CD8-positive, alpha-beta T cell (primary cell): ENCODE measurements at regions of chr17 and their contacts with region 1.

Region 1: DNA sequence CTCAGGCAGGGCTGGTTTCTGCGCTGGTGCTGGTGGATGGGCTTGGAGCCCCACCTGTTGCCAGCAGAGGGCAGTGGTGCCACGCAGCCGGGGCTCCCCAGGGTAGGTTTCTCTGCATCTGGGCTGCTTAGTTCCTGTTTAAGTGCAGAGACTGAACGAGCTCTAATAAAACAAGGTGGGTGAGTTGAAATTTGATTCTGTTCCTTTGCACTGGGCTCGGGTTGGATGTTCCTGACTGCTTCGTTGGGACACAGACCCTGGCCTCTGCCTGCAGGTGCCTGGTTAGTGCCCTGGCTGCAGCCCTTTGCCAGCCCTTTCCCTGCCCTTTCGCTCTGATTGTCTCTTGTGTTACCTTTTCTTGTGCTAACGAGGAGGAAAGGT is 30.0 kb downstream of the TBCD start:
- DNase-seq: peak; percentile 81 to 94 (median 87)
- ATAC-seq: peak; percentile 100
- H3K4me3 ChIP-seq: no peak overlapping the region
- H3K4me3 Mint-ChIP-seq: no peak overlapping the region
- H3K27ac ChIP-seq: no peak overlapping the region
- H3K27ac Mint-ChIP-seq: peak overlapping the region; percentile 46
- H3K4me1 ChIP-seq: peaks cover 9% of the 10 kb centered on the region
- H3K4me1 Mint-ChIP-seq: peaks cover 16% of the 10 kb centered on the region
- H3K27me3 ChIP-seq: no peaks in the 10 kb centered on the region
- H3K27me3 Mint-ChIP-seq: no peaks in the 10 kb centered on the region
- CTCF ChIP-seq: peak; percentile 88

Region 2: GRCh38 chr17:82863941-82864774 is 82.3 kb after region 1 on chr17:
- CTCF ChIA-PET with region 1: interaction called, 8 read pairs
- POLR2A ChIA-PET with region 1: interaction called, 4 read pairs
- intact Hi-C with region 1: loop called in 1 of 2 experiments (anchors 2 kb)
- DNase-seq: peak; percentile 75 to 97 (median 88)
- ATAC-seq: peak; percentile 85
- H3K4me3 ChIP-seq: peak overlapping the region; percentile 23 to 46
- H3K4me3 Mint-ChIP-seq: peak overlapping the region; percentile 63
- H3K27ac ChIP-seq: peak overlapping the region; percentile 54 to 84
- H3K27ac Mint-ChIP-seq: peak overlapping the region; percentile 98
- H3K4me1 ChIP-seq: peaks cover 65% of the 10 kb centered on the region
- H3K4me1 Mint-ChIP-seq: peaks cover 65% of the 10 kb centered on the region
- H3K27me3 ChIP-seq: no peaks in the 10 kb centered on the region
- H3K27me3 Mint-ChIP-seq: no peaks in the 10 kb centered on the region
- CTCF ChIP-seq: no peak

Region 3: GRCh38 chr17:82881900-82882714 is 100.2 kb after region 1 on chr17:
- CTCF ChIA-PET with region 1: interaction called, 11 read pairs
- POLR2A ChIA-PET with region 1: no interaction called
- intact Hi-C with region 1: no loop called
- DNase-seq: no peak
- ATAC-seq: no peak
- H3K4me3 ChIP-seq: peak overlapping the region; percentile 14 to 70
- H3K4me3 Mint-ChIP-seq: peak overlapping the region; percentile 82
- H3K27ac ChIP-seq: peak overlapping the region; percentile 74
- H3K27ac Mint-ChIP-seq: peak overlapping the region; percentile 99
- H3K4me1 ChIP-seq: peaks cover 63% of the 10 kb centered on the region
- H3K4me1 Mint-ChIP-seq: peaks cover 71% of the 10 kb centered on the region
- H3K27me3 ChIP-seq: no peaks in the 10 kb centered on the region
- H3K27me3 Mint-ChIP-seq: no peaks in the 10 kb centered on the region
- CTCF ChIP-seq: no peak

Region 4: DNA sequence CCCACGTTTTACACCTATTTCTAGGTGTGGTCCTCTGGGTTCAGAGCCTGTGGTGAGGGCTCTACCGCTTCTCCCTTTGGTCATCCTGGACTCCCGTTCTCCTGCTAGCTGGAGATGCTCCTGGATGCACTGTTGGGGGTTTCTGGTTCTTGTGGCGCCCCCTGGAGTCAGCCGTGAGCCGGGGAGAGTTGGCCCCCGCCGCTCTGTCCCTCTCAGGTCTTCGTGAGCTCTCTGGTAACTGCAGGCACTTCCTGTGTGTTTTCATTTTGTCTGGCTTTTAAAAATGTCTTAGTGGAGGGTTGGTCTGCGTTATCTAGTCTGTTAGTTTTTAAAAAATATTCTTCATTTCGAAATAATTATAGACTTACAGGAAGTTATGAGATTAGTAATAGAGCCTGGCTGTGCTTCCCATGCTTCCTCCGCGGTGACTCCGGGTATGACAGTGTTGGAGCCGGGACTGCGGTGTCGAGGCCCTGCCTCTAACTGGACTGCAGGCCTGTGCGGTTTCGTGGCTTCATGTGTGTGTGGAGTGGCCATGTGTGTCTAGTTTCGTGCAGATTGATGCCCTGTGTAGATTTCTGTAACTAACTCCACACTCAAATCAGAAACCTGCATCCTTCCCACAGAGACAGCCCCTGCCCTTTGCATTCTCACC is 135.9 kb after region 1 on chr17:
- CTCF ChIA-PET with region 1: interaction called, 52 read pairs
- POLR2A ChIA-PET with region 1: no interaction called
- intact Hi-C with region 1: loop called (anchors 1 kb)
- DNase-seq: peak in 8 of 9 experiments; percentile 16 to 67 (median 50)
- ATAC-seq: peak; percentile 65
- H3K4me3 ChIP-seq: no peak overlapping the region
- H3K4me3 Mint-ChIP-seq: no peak overlapping the region
- H3K27ac ChIP-seq: no peak overlapping the region
- H3K27ac Mint-ChIP-seq: no peak overlapping the region
- H3K4me1 ChIP-seq: peaks cover 4% of the 10 kb centered on the region
- H3K4me1 Mint-ChIP-seq: peaks cover 15% of the 10 kb centered on the region
- H3K27me3 ChIP-seq: no peaks in the 10 kb centered on the region
- H3K27me3 Mint-ChIP-seq: no peaks in the 10 kb centered on the region
- CTCF ChIP-seq: peak; percentile 21

Region 5: GRCh38 chr17:82962864-82963684 is 181.2 kb after region 1 on chr17:
- CTCF ChIA-PET with region 1: no interaction called
- POLR2A ChIA-PET with region 1: no interaction called
- intact Hi-C with region 1: loop called (anchors 1 to 5 kb)
- DNase-seq: peak in 8 of 9 experiments; percentile 14 to 74 (median 38)
- ATAC-seq: peak; percentile 66
- H3K4me3 ChIP-seq: no peak overlapping the region
- H3K4me3 Mint-ChIP-seq: no peak overlapping the region
- H3K27ac ChIP-seq: no peak overlapping the region
- H3K27ac Mint-ChIP-seq: no peak overlapping the region
- H3K4me1 ChIP-seq: peaks cover 6% of the 10 kb centered on the region
- H3K4me1 Mint-ChIP-seq: peaks cover 6% of the 10 kb centered on the region
- H3K27me3 ChIP-seq: no peaks in the 10 kb centered on the region
- H3K27me3 Mint-ChIP-seq: no peaks in the 10 kb centered on the region
- CTCF ChIP-seq: peak; percentile 33

Region 6: DNA sequence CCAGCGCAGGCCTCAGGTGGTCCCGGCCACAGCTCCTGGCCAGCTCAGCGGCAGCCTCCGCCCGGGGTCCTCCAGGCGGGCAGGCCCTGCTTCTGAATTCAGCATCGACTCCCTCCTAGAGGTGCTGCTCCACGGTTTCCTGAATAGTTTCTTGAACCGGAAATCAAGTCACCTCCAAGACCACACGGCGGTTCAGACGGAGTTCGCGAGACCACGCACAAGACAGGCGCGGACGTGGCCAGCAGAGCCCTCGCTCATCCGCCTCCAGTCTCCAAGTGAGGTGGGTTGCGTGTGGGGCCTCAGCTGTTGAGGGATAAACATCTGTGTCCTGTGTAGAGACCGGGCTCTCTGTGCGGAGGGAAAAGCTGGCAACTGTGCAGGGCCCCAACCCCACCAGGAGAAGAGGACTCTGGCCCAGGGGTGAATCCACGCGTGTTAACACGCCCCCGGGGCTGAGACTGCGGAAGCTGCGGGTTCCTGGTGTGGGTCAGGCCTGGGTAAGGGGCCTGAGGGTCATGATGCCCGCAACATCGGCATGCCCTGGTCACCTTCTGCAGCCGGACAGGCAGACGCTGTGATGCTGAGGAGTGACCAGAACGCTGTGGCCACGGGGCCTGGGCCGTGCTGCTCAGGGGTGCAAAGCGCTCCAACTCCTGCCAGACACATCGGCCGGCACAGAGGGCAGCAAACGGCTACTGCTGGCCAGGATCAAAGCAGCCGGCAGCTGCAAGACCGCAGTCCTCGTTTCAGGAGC is 242.5 kb after region 1 on chr17:
- CTCF ChIA-PET with region 1: no interaction called
- POLR2A ChIA-PET with region 1: no interaction called
- intact Hi-C with region 1: loop called in 1 of 2 experiments (anchors 10 kb)
- DNase-seq: peak in 2 of 9 experiments; percentile 19 to 32
- ATAC-seq: no peak
- H3K4me3 ChIP-seq: no peak overlapping the region
- H3K4me3 Mint-ChIP-seq: no peak overlapping the region
- H3K27ac ChIP-seq: no peak overlapping the region
- H3K27ac Mint-ChIP-seq: no peak overlapping the region
- H3K4me1 ChIP-seq: peaks cover 29% of the 10 kb centered on the region
- H3K4me1 Mint-ChIP-seq: peaks cover 36% of the 10 kb centered on the region
- H3K27me3 ChIP-seq: no peaks in the 10 kb centered on the region
- H3K27me3 Mint-ChIP-seq: no peaks in the 10 kb centered on the region
- CTCF ChIP-seq: no peak

Region 7: DNA sequence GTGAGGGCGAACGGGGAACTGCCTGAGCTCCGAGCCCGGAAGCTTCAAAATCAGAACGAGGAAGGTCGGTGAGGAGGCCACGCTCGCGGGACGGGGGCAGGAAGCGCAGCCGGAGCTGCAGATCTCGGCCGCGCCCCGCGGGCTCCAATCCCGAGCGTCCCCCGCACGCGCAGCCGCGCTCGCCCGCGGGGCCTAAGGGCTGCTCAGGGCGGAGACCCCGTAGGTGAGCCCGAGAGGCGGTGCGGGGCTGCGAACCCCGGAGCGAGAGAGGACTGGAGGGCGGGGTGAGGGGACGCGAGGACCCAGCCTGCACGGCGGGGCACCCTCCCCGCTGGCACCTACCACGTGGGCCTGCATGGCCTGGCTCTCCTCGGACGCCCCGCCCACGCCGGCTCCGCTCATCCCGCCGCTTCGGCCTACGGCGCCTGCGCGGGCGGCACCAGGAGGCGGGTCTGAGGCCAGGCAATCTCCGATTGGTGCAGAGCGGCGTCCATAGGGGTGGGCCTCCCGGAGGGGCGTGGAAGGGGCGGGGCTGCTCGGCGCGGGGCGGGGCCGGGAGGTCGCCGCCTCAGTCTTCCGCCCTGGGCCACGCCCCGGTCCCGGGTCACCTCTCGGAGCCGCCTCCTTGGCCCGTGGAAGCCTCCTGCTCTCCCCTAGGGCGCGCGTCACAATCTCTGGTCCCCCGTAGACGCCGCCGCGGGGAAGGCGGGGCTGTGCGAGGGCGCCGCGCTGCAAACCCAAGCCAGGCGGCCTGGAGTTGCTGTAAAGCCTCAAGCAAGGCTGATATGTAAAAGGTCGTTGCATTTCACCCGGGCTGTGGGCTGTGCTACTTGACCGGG is 269.7 kb after region 1 on chr17:
- CTCF ChIA-PET with region 1: interaction called, 3 read pairs
- POLR2A ChIA-PET with region 1: no interaction called
- intact Hi-C with region 1: loop called in 1 of 2 experiments (anchors 5 kb)
- DNase-seq: peak; percentile 95 to 99 (median 99)
- ATAC-seq: peak; percentile 85
- H3K4me3 ChIP-seq: peak overlapping the region; percentile 49 to 68
- H3K4me3 Mint-ChIP-seq: peak overlapping the region; percentile 86
- H3K27ac ChIP-seq: peak overlapping the region; percentile 75 to 87
- H3K27ac Mint-ChIP-seq: peak overlapping the region; percentile 94
- H3K4me1 ChIP-seq: peaks cover 40% of the 10 kb centered on the region
- H3K4me1 Mint-ChIP-seq: peaks cover 40% of the 10 kb centered on the region
- H3K27me3 ChIP-seq: no peaks in the 10 kb centered on the region
- H3K27me3 Mint-ChIP-seq: no peaks in the 10 kb centered on the region
- CTCF ChIP-seq: no peak